ENCODE measurements at regions of chr3 and their contacts with region 1.

Region 1: GRCh38 chr3:167740961-167741587 is 5.6 kb downstream of the SERPINI1 start:
- DNase-seq: peak in 4 of 9 donors; percentile 14 to 34 (median 22)
- ATAC-seq: peak; percentile 82
- H3K4me3 ChIP-seq: no peak overlapping the region
- H3K4me3 Mint-ChIP-seq: no peak overlapping the region
- H3K27ac ChIP-seq: no peak overlapping the region
- H3K27ac Mint-ChIP-seq: no peak overlapping the region
- H3K4me1 ChIP-seq: peaks cover 3 to 5% of the 10 kb centered on the region in 2 donors
- H3K4me1 Mint-ChIP-seq: peaks cover 0 to 16% (median 11%) of the 10 kb centered on the region in 7 donors
- H3K27me3 ChIP-seq: no peaks in the 10 kb centered on the region
- H3K27me3 Mint-ChIP-seq: no peaks in the 10 kb centered on the region

Region 2: GRCh38 chr3:167380004-167380689 is 360.9 kb before region 1 on chr3 and contains the start of gene ZBBX:
- CTCF ChIA-PET with region 1: interaction called, 9 read pairs
- POLR2A ChIA-PET with region 1: no interaction called
- intact Hi-C with region 1: loop called (anchors 1 kb)
- DNase-seq: peak; percentile 75 to 87 (median 83)
- ATAC-seq: peak; percentile 95
- H3K4me3 ChIP-seq: peak within 1 kb of the TSS; percentile 49
- H3K4me3 Mint-ChIP-seq: peak within 1 kb of the TSS; percentile 71 to 91 (median 85)
- H3K27ac ChIP-seq: no peak within 1 kb of the TSS
- H3K27ac Mint-ChIP-seq: peak within 1 kb of the TSS; percentile 58 to 92 (median 77)
- H3K4me1 ChIP-seq: peaks cover 0 to 3% of the 10 kb centered on the region in 2 donors
- H3K4me1 Mint-ChIP-seq: peaks cover 5 to 14% (median 7%) of the 10 kb centered on the region in 7 donors
- H3K27me3 ChIP-seq: no peaks in the 10 kb centered on the region
- H3K27me3 Mint-ChIP-seq: peaks cover 0 to 15% (median 6%) of the 10 kb centered on the region in 5 donors
- total RNA-seq, gene ZBBX: not detected

Region 3: DNA sequence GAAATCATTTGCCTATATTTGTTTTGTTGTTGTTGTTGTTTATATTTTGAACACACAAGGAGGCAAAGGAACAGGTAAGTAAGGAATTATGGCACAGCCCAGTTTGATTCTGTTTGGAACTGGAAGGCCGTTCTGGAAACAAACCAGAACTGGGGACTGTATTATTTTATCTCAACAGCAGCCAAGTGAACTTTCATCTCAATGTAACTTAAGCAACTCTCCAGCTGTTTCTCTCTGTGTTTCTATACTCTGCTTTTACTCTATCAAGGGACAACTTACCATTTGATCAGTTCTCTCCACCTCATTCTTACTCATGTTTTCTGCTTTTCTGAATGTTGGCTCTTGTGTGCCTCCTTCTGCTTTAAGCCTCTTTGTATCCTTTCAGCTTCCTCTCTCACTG is 71.4 kb before region 1 on chr3:
- CTCF ChIA-PET with region 1: no interaction called
- POLR2A ChIA-PET with region 1: no interaction called
- intact Hi-C with region 1: no loop called
- DNase-seq: no peak
- ATAC-seq: no peak
- H3K4me3 ChIP-seq: no peak overlapping the region
- H3K4me3 Mint-ChIP-seq: no peak overlapping the region
- H3K27ac ChIP-seq: no peak overlapping the region
- H3K27ac Mint-ChIP-seq: peak overlapping the region in 2 of 9 donors; percentile 1 to 47
- H3K4me1 ChIP-seq: no peaks in the 10 kb centered on the region
- H3K4me1 Mint-ChIP-seq: no peaks in the 10 kb centered on the region
- H3K27me3 ChIP-seq: no peaks in the 10 kb centered on the region
- H3K27me3 Mint-ChIP-seq: no peaks in the 10 kb centered on the region

Measured in naive thymus-derived CD4-positive, alpha-beta T cell (primary cell).